CD4-positive, alpha-beta memory T cell (primary cell): ENCODE measurements at regions of chr13 and their contacts with region 1.

Region 1: DNA sequence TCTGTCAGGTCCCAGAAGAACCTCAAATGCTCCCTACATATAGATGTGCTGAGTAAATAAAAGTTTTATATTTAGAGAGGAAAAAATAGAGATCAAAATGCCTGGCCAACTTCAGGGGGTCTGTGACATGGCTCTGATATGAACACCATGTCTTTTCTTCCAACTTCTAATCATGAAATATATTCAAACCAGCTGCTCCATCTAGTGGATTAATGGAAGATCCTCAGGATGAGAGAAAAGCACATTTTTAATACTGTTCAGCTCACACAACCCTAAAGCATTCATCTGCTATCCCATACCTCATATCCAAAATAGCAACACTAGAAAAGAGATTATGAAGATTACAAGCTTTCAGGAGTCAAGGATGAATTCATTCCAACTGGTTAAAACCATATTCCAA is 56.0 kb upstream of the DOCK9 start:
- DNase-seq: peak in 2 of 5 donors; percentile 21 to 28
- H3K4me3 ChIP-seq: no peak overlapping the region
- H3K4me3 Mint-ChIP-seq: no peak overlapping the region
- H3K27ac ChIP-seq: no peak overlapping the region
- H3K27ac Mint-ChIP-seq: peak overlapping the region in 3 of 7 donors; percentile 55 to 85 (median 63)
- H3K4me1 ChIP-seq: peaks cover 22% of the 10 kb centered on the region
- H3K4me1 Mint-ChIP-seq: peaks cover 32 to 76% (median 51%) of the 10 kb centered on the region in 4 donors
- H3K27me3 ChIP-seq: no peaks in the 10 kb centered on the region
- H3K27me3 Mint-ChIP-seq: no peaks in the 10 kb centered on the region

Region 2: GRCh38 chr13:98842864-98843481 is 190.8 kb before region 1 on chr13:
- CTCF ChIA-PET with region 1: interaction called, 5 read pairs
- POLR2A ChIA-PET with region 1: no interaction called
- intact Hi-C with region 1: loop called (anchors 1 kb)
- DNase-seq: peak; percentile 33 to 47 (median 35)
- H3K4me3 ChIP-seq: no peak overlapping the region
- H3K4me3 Mint-ChIP-seq: no peak overlapping the region
- H3K27ac ChIP-seq: no peak overlapping the region
- H3K27ac Mint-ChIP-seq: peak overlapping the region in 2 of 7 donors; percentile 17 to 36
- H3K4me1 ChIP-seq: no peaks in the 10 kb centered on the region
- H3K4me1 Mint-ChIP-seq: peaks cover 0 to 8% (median 7%) of the 10 kb centered on the region in 4 donors
- H3K27me3 ChIP-seq: no peaks in the 10 kb centered on the region
- H3K27me3 Mint-ChIP-seq: no peaks in the 10 kb centered on the region

Region 3: GRCh38 chr13:99018418-99019180 is 15.2 kb before region 1 on chr13:
- CTCF ChIA-PET with region 1: interaction called, 21 read pairs
- POLR2A ChIA-PET with region 1: no interaction called
- intact Hi-C with region 1: no loop called
- DNase-seq: no peak
- H3K4me3 ChIP-seq: no peak overlapping the region
- H3K4me3 Mint-ChIP-seq: peak overlapping the region in 1 of 8 donors; percentile 26
- H3K27ac ChIP-seq: no peak overlapping the region
- H3K27ac Mint-ChIP-seq: peak overlapping the region in 2 of 7 donors; percentile 26 to 61
- H3K4me1 ChIP-seq: peaks cover 41% of the 10 kb centered on the region
- H3K4me1 Mint-ChIP-seq: peaks cover 44 to 64% (median 56%) of the 10 kb centered on the region in 4 donors
- H3K27me3 ChIP-seq: no peaks in the 10 kb centered on the region
- H3K27me3 Mint-ChIP-seq: no peaks in the 10 kb centered on the region

Region 4: DNA sequence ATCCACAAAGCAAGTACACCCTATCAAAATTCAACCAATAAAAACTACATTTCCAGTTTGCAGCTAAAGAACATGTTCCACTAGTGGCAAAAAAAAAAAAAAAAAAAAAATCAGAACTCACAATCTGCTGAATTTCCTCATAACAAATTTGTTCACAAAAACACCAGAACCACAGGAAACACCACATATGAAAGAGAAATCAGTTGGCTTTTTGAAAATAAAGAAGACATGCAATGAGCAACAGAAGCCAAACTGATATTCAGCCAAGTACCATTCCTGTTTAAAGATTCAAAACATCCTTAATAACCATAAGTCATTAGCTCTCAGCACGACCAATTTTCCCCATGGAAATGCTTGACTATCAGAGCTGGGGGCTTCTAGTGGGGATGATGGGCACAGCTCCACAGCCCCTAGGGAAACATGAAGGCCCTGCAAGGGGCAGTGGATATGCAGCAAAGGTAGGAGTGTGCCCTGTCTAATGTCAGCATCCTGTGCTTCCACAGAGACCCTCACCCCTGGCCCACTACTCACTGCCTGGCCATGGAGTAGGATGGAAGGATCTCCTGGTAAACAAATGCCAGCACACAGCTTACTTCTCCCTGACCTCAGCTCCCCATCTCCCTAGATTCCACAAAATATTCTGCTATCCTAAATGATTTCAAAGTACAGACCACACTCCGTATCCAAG is 18.1 kb after region 1 on chr13:
- CTCF ChIA-PET with region 1: interaction called, 38 read pairs
- POLR2A ChIA-PET with region 1: interaction called, 5 read pairs
- intact Hi-C with region 1: no loop called
- DNase-seq: peak in 4 of 5 donors; percentile 55 to 66 (median 62)
- H3K4me3 ChIP-seq: peak overlapping the region; percentile 36 to 57
- H3K4me3 Mint-ChIP-seq: peak overlapping the region; percentile 70 to 89 (median 85)
- H3K27ac ChIP-seq: peak overlapping the region; percentile 38
- H3K27ac Mint-ChIP-seq: peak overlapping the region; percentile 86 to 97 (median 94)
- H3K4me1 ChIP-seq: peaks cover 97% of the 10 kb centered on the region
- H3K4me1 Mint-ChIP-seq: peaks cover 70 to 97% (median 85%) of the 10 kb centered on the region in 4 donors
- H3K27me3 ChIP-seq: no peaks in the 10 kb centered on the region
- H3K27me3 Mint-ChIP-seq: no peaks in the 10 kb centered on the region

Region 5: GRCh38 chr13:99075268-99076191 is 41.7 kb after region 1 on chr13:
- CTCF ChIA-PET with region 1: interaction called, 10 read pairs
- POLR2A ChIA-PET with region 1: interaction called, 3 read pairs
- intact Hi-C with region 1: loop called (anchors 1 kb)
- DNase-seq: peak; percentile 48 to 70 (median 50)
- H3K4me3 ChIP-seq: no peak overlapping the region
- H3K4me3 Mint-ChIP-seq: peak overlapping the region; percentile 68 to 79 (median 72)
- H3K27ac ChIP-seq: peak overlapping the region; percentile 55
- H3K27ac Mint-ChIP-seq: peak overlapping the region; percentile 88 to 96 (median 92)
- H3K4me1 ChIP-seq: peaks cover 68% of the 10 kb centered on the region
- H3K4me1 Mint-ChIP-seq: peaks cover 59 to 93% (median 75%) of the 10 kb centered on the region in 4 donors
- H3K27me3 ChIP-seq: no peaks in the 10 kb centered on the region
- H3K27me3 Mint-ChIP-seq: no peaks in the 10 kb centered on the region

Region 6: DNA sequence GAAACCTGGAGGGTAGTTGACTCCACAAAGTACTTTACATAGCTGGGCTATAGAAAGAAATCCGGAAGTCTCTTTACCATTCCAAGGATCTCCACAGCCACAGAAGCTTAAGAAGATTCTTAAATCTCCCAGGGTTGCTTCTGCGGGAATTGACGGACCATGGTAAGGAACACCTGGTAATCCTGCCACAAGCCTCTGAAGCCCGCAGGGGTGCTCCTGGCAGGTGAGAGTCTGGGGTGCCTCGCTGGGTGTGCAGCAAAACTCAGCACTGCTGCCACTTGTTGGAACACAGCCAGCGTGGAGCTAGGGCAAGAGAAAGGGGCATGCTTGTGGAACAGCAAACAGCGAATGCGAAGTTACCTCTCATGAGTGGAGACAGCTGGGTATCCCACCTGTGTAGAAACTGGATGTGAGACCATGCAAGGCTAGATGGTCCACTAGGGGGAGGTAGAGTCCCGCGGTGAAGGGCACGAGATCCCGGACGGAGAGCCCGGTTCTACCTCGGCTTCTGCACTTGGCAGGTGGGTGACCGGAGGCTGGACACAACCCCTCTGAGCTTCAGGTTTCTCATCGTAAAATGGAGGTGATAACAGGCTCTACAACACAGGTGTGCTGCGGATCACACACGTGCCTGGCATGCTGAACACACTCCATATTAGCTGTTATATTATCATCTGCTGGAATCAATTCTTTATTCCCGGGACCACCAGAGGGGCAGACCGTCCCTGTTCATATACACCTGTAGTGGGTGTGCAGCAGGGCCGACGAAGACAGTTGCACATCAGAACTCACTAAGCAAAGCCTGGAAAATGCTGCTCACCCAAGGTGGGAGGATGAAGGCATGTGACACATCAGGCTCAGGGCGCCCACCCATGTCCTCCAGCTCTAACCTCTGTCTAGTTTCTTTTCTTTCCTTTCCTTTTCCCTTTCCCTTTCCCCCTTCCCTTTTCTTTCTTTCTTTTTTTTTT is 142.8 kb after region 1 on chr13:
- CTCF ChIA-PET with region 1: interaction called, 16 read pairs
- POLR2A ChIA-PET with region 1: no interaction called
- intact Hi-C with region 1: loop called (anchors 5 kb)
- DNase-seq: peak; percentile 69 to 79 (median 75)
- H3K4me3 ChIP-seq: peak overlapping the region in 1 of 2 donors; percentile 19
- H3K4me3 Mint-ChIP-seq: peak overlapping the region in 7 of 8 donors; percentile 62 to 80 (median 71)
- H3K27ac ChIP-seq: no peak overlapping the region
- H3K27ac Mint-ChIP-seq: peak overlapping the region in 6 of 7 donors; percentile 37 to 81 (median 68)
- H3K4me1 ChIP-seq: peaks cover 44% of the 10 kb centered on the region
- H3K4me1 Mint-ChIP-seq: peaks cover 32 to 43% (median 36%) of the 10 kb centered on the region in 4 donors
- H3K27me3 ChIP-seq: no peaks in the 10 kb centered on the region
- H3K27me3 Mint-ChIP-seq: no peaks in the 10 kb centered on the region